Posterior cingulate gyrus (tissue), 11 donors: ENCODE measurements at regions of chr3 and their contacts with region 1.

Region 1: DNA sequence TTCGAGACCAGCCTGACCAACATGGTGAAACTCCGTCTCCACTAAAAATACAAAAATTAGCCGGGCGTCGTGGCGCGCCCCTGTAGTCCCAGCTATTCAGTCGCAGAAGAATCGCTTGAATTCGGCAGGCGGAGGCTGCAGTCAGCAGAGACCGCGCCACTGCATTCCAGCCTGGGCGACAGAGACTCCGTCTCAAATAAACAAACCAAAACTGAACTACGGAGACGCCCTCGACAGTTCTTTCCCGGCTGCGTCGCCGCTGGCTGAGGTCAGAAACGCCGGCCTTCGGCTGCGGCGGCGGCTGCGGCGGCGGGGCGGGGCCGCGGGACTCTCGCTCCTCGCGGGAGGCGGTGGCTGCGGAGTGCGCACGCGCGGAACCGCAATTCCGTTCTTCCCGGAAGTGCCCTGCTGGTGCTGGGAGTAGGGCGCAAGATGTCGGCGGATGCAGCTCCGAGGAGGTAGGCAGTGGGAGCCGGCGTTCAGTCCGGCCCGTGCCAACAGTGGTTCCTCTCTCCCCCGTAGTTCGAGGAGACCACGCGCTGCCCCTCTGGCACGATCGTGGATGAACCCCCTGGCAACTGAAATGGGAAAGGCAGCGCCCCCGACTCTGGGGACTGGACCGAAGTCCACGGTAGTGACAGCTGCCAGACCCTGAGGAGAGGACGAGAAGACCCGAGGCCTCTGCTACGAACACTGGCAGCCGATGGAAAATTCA is 49.5 kb downstream of the TMEM44 start:
- DNase-seq: peak; percentile 91 to 99 (median 94)

Region 2: GRCh38 chr3:194486540-194487288 is 97.0 kb before region 1 on chr3 and contains the start of gene ATP13A3:
- intact Hi-C with region 1: loop called (anchors 1 kb)
- DNase-seq: peak; percentile 81 to 99 (median 90)